Esophagus squamous epithelium (tissue), 5 donors: ENCODE measurements at regions of chr11 and their contacts with region 1.

Region 1: DNA sequence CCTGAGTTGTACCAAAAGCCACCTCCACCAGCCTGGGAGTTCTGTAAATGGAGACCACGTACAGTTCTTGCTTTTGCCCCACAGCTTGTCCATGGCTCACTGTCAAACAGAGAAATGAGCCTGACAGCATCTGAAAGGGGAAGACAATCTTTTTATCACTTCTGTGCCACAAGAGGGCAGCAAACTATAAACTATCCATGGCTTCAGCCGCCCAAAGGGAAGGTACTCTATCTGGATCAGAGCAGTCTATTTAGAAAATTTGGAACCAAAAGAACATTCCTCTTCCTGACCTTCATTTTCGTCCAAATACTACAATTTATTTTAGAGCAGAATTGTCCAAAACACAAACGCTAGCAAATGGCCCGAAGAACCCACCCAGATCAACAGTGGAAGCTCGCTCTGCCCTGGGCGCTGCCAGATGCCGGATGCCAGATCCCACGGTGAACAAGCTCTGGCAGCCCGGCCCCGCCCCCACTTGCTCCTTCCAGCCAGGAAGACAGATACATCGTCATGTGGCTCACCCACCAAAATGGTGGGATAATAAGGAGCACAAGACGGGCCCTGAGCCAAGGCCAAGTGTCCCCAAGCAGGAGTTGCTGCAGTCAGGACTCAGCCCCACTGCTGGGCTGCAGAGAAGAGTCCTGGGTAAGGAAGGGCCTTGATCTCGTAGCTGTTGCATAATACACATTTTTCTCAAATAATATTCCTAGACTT is 23.9 kb upstream of the SCGB1A1 start:
- DNase-seq: no peak
- H3K4me3 ChIP-seq: peak overlapping the region; percentile 8 to 56 (median 39)
- H3K27ac ChIP-seq: peak overlapping the region; percentile 73 to 91 (median 88)
- H3K4me1 ChIP-seq: peaks cover 36 to 67% (median 37%) of the 10 kb centered on the region in 3 donors
- H3K27me3 ChIP-seq: no peaks in the 10 kb centered on the region
- CTCF ChIP-seq: peak; percentile 53 to 86 (median 72)
- POLR2A ChIP-seq: no peak

Region 2: GRCh38 chr11:62556108-62556871 is 161.3 kb after region 1 on chr11:
- intact Hi-C with region 1: loop called (anchors 5 kb)
- DNase-seq: peak; percentile 75
- H3K4me3 ChIP-seq: peak overlapping the region in 3 of 4 donors; percentile 7 to 43 (median 22)
- H3K27ac ChIP-seq: peak overlapping the region; percentile 92 to 95 (median 94)
- H3K4me1 ChIP-seq: peaks cover 77 to 100% (median 97%) of the 10 kb centered on the region in 3 donors
- H3K27me3 ChIP-seq: no peaks in the 10 kb centered on the region
- CTCF ChIP-seq: no peak
- POLR2A ChIP-seq: no peak

Region 3: GRCh38 chr11:62689421-62690183 is 294.6 kb after region 1 on chr11 and contains the start of gene LRRN4CL:
- intact Hi-C with region 1: no loop called
- DNase-seq: no peak
- H3K4me3 ChIP-seq: peak within 1 kb of the TSS in 3 of 4 donors; percentile 26 to 58 (median 36)
- H3K27ac ChIP-seq: peak within 1 kb of the TSS; percentile 40 to 87 (median 65)
- H3K4me1 ChIP-seq: peaks cover 0 to 51% (median 13%) of the 10 kb centered on the region in 3 donors
- H3K27me3 ChIP-seq: peaks cover 0 to 10% (median 0%) of the 10 kb centered on the region in 4 donors
- CTCF ChIP-seq: no peak
- POLR2A ChIP-seq: peak in 2 of 4 donors; percentile 34 to 43
- total RNA-seq, gene LRRN4CL: 0.27 to 12.0 (median 4.5) TPM